PC-3 (cell line): ENCODE measurements at regions of chr5 and their contacts with region 1.

Region 1: DNA sequence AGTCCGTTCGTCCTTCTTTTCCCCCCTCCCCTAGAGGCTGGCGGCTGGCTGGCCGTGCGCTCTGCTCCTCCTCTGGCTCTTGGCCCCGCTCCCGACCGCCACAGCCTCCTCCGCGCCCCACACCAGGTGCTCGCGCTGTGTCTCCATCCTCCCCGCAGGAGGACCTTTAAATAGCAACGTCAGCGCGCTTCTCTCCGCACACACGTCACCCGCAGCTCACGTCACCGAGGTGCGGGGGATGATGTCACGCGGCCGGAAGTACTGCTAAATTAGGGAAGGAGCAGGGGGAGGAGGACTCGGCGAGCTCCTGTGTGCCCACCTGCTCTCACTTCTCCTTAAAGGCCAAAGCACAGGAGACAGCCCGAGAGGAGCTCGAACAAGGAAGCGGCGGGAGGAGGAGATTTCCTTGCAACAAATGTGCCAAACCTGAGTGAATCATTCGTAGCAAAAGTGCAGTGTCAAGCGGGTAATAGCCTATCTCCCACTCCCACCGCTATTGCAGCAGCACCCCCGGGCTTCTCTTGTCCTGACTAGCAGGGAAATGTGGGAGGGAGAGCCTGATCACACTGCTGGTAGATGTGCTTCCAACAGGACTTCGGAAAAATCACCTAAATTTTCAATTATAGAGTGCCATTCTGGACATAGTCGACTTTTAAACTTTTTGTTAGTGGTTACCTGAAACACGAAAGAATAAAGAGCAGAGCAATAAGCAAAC is 614 bp upstream of the HOMER1 start:
- DNase-seq: peak; percentile 81
- ATAC-seq: peak; percentile 56
- H3K4me3 ChIP-seq: peak overlapping the region; percentile 91
- H3K27ac ChIP-seq: peak overlapping the region; percentile 65
- H3K4me1 ChIP-seq: peaks cover 15% of the 10 kb centered on the region; the same call in 1 of the 2 replicates
- H3K27me3 ChIP-seq: no peaks in the 10 kb centered on the region
- CTCF ChIP-seq: no peak

Region 2: GRCh38 chr5:79241535-79241979 is 273.0 kb before region 1 on chr5:
- CTCF ChIA-PET with region 1: no interaction called
- POLR2A ChIA-PET with region 1: no interaction called
- intact Hi-C with region 1: loop called (anchors 2 kb)
- DNase-seq: peak; percentile 63
- ATAC-seq: peak; percentile 65
- H3K4me3 ChIP-seq: peak overlapping the region; percentile 48
- H3K27ac ChIP-seq: peak overlapping the region; percentile 24; the same call in 1 of the 2 replicates
- H3K4me1 ChIP-seq: peaks cover 26% of the 10 kb centered on the region
- H3K27me3 ChIP-seq: no peaks in the 10 kb centered on the region
- CTCF ChIP-seq: no peak

Region 3: DNA sequence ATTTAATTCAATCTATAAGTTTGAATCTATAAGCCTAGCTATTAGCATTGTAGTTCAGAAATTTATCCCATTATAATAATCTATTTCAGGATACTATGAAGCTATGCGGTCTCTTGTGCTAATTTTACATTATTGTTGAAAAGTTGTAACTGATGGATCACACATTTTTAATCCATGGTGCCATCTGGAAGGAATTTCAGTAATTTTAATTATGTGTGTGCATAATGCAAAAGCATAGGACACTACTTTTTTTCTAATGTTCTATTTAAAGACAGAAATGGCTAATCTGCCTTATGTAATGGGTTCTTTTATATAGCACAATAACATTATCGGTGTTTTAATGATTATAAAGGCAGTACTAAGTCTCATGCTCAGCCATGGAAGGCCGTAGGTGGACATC is 91.3 kb before region 1 on chr5:
- CTCF ChIA-PET with region 1: no interaction called
- POLR2A ChIA-PET with region 1: no interaction called
- intact Hi-C with region 1: no loop called
- DNase-seq: no peak
- ATAC-seq: no peak
- H3K4me3 ChIP-seq: no peak overlapping the region
- H3K27ac ChIP-seq: no peak overlapping the region
- H3K4me1 ChIP-seq: no peaks in the 10 kb centered on the region
- H3K27me3 ChIP-seq: no peaks in the 10 kb centered on the region
- CTCF ChIP-seq: no peak

Region 4: DNA sequence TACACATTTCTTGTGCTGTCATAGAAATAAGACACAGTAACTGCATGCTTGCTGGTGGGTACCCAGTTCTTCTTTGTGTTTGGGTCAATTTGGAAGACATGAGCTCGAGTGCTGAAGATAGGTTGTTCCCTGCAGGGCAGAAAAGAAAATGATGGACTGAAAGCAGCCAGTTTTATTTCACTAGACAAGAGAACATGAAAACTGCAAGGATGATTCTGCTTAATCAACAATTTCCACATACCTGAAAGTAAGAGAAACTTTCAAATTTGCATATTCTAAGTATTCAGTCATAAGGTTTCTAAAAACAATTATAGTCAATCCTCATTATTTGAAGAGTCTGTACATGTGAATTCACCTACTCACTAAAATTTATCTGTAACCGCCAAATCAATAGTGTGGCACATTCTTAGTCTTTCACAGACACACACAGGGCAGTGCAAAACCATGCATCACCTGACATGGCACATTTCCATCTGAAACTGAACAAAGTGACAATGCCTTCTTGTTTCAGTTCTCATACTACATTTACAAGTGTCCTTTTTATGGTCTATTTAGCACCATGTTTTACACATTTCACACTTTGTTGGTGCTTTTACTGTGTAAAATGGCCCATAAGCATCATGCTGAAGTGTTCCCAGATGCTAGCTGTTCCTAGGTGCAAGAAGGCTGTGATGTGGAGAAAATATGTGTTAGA is 57.5 kb before region 1 on chr5:
- CTCF ChIA-PET with region 1: no interaction called
- POLR2A ChIA-PET with region 1: no interaction called
- intact Hi-C with region 1: no loop called
- DNase-seq: no peak
- ATAC-seq: no peak
- H3K4me3 ChIP-seq: no peak overlapping the region
- H3K27ac ChIP-seq: no peak overlapping the region
- H3K4me1 ChIP-seq: no peaks in the 10 kb centered on the region
- H3K27me3 ChIP-seq: no peaks in the 10 kb centered on the region
- CTCF ChIP-seq: no peak

Region 5: GRCh38 chr5:79474367-79475151 is 40.0 kb before region 1 on chr5:
- CTCF ChIA-PET with region 1: no interaction called
- POLR2A ChIA-PET with region 1: no interaction called
- intact Hi-C with region 1: loop called (anchors 5 kb)
- DNase-seq: no peak
- ATAC-seq: no peak
- H3K4me3 ChIP-seq: no peak overlapping the region
- H3K27ac ChIP-seq: no peak overlapping the region
- H3K4me1 ChIP-seq: peaks cover 6% of the 10 kb centered on the region; the same call in 1 of the 2 replicates
- H3K27me3 ChIP-seq: no peaks in the 10 kb centered on the region
- CTCF ChIP-seq: no peak

Region 6: DNA sequence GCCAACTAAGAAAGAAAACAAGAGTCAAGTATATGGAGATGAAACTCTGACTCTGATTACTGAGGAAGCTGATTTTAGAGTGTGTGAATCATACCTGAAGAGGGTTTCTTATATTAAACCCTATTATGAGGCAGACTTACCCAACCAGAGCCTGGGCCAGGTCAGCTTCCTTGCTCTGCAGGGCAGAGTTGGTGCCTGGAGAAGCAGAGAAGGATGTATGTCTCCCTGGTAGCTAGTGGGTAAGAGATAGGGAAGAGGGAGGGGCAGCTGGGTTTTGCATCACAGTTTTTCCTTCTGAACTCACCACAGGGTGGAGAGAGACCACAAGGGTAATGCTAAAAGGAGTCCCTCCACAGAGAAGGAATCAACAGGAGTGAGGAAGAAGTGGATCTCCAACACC is 279.2 kb after region 1 on chr5:
- CTCF ChIA-PET with region 1: no interaction called
- POLR2A ChIA-PET with region 1: no interaction called
- intact Hi-C with region 1: no loop called
- DNase-seq: no peak
- ATAC-seq: no peak
- H3K4me3 ChIP-seq: no peak overlapping the region
- H3K27ac ChIP-seq: no peak overlapping the region
- H3K4me1 ChIP-seq: no peaks in the 10 kb centered on the region
- H3K27me3 ChIP-seq: no peaks in the 10 kb centered on the region
- CTCF ChIP-seq: no peak

Region 7: DNA sequence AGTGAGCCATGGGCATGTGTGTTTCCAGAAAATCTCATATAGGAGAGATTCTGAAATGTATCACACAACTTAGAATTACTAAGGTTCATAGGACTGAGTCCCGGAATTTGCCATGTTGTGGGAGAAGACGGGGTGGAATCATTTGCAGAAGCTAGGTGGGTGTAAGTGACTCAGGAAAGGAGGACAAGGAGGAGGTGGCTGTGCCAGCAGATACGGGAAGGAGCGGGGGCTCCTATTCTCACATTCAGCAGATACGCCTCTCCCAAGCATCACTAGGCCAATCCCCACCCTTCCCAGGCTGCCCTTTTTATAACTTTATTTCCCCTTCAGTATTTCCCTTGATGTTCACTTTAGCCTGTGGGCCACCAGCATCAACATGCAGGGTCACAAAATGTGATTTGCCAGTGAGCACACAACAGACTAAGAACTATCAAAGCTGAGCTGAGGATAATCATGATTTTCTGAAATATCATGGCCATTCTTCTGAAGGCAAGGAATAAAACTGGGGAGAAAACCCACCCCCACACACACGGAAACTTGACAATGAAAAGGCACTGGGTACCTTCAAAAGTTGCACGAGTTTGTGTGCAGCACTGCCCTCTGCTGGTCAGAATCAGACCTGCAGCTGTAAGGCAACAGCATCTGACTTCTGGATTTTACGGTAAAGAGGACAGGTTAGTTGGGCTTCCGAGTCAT is 343.3 kb after region 1 on chr5:
- CTCF ChIA-PET with region 1: no interaction called
- POLR2A ChIA-PET with region 1: no interaction called
- intact Hi-C with region 1: no loop called
- DNase-seq: peak; percentile 77
- ATAC-seq: no peak; the same call in 1 of the 2 replicates
- H3K4me3 ChIP-seq: no peak overlapping the region
- H3K27ac ChIP-seq: no peak overlapping the region
- H3K4me1 ChIP-seq: peaks cover 4% of the 10 kb centered on the region; the same call in 1 of the 2 replicates
- H3K27me3 ChIP-seq: no peaks in the 10 kb centered on the region
- CTCF ChIP-seq: peak; percentile 91